ENCODE measurements at regions of chr11 and their contacts with region 1.

Region 1: DNA sequence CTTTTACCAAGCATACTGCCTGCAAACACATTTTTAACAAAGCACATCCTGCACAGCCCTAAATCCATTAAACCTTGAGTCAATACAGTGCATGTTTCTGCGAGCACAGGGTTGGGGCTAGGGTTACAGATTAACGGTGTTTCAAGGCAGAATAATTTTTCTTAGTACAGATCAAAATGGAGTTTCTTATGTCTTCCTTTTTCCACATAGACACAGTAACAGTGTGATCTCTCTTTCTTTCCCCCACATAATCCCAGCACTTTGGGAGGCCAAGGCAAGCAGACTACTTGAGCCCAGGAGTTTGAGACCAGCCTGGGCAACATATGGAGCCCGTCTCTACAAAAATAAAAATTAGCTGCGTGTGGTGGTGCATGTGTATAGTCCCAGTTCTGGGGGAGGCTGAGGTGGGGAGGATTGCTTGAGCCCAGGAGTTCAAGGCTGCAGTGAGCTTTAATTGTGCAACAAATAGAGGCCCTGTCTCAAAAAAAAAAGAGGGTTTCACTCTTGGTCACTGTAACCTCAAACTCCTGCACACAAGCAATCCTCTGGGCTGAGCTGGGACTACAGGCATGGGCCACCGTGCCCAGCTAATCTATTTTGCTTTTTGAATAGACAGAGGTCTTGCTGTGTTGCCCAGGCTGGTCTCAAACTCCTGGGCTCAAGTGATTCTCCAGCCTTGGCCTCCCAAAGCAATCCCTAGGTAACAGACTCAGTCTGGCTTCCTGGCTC is 19.7 kb upstream of the SLC3A2 start:
- DNase-seq: no peak
- H3K4me3 Mint-ChIP-seq: no peak overlapping the region
- H3K27ac Mint-ChIP-seq: no peak overlapping the region
- H3K4me1 Mint-ChIP-seq: peaks cover 23% of the 10 kb centered on the region
- H3K27me3 Mint-ChIP-seq: no peaks in the 10 kb centered on the region
- CTCF ChIP-seq: no peak

Region 2: DNA sequence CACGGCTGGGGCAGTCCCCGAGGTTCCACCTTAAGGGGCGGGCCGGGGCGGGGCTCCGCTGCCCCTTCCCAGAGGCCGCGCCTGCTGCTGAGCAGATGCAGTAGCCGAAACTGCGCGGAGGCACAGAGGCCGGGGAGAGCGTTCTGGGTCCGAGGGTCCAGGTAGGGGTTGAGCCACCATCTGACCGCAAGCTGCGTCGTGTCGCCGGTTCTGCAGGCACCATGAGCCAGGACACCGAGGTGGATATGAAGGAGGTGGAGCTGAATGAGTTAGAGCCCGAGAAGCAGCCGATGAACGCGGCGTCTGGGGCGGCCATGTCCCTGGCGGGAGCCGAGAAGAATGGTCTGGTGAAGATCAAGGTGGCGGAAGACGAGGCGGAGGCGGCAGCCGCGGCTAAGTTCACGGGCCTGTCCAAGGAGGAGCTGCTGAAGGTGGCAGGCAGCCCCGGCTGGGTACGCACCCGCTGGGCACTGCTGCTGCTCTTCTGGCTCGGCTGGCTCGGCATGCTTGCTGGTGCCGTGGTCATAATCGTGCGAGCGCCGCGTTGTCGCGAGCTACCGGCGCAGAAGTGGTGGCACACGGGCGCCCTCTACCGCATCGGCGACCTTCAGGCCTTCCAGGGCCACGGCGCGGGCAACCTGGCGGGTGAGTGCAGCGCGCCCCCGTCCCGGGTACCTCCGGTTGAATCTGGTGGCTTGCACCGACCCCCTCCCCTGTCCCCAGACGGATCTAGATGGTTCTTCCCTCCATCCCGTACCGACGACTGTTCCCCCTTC is 20.0 kb after region 1 on chr11 and contains the start of gene SLC3A2:
- CTCF ChIA-PET with region 1: interaction called, 31 read pairs
- POLR2A ChIA-PET with region 1: interaction called, 152 read pairs
- intact Hi-C with region 1: loop called (anchors 2 kb)
- DNase-seq: peak; percentile 91
- H3K4me3 Mint-ChIP-seq: peak within 1 kb of the TSS; percentile 100
- H3K27ac Mint-ChIP-seq: peak within 1 kb of the TSS; percentile 99
- H3K4me1 Mint-ChIP-seq: peaks cover 47% of the 10 kb centered on the region
- H3K27me3 Mint-ChIP-seq: no peaks in the 10 kb centered on the region
- CTCF ChIP-seq: peak; percentile 70
- total RNA-seq, gene SLC3A2: 838 and 896 TPM in 2 replicates

Region 3: GRCh38 chr11:62896049-62896448 is 35.0 kb after region 1 on chr11:
- CTCF ChIA-PET with region 1: no interaction called
- POLR2A ChIA-PET with region 1: no interaction called
- intact Hi-C with region 1: no loop called
- DNase-seq: no peak
- H3K4me3 Mint-ChIP-seq: no peak overlapping the region
- H3K27ac Mint-ChIP-seq: no peak overlapping the region
- H3K4me1 Mint-ChIP-seq: no peaks in the 10 kb centered on the region
- H3K27me3 Mint-ChIP-seq: peaks cover 40% of the 10 kb centered on the region
- CTCF ChIP-seq: no peak

Region 4: GRCh38 chr11:62965574-62965973 is 104.6 kb after region 1 on chr11:
- CTCF ChIA-PET with region 1: no interaction called
- POLR2A ChIA-PET with region 1: no interaction called
- intact Hi-C with region 1: no loop called
- DNase-seq: no peak
- H3K4me3 Mint-ChIP-seq: no peak overlapping the region
- H3K27ac Mint-ChIP-seq: no peak overlapping the region
- H3K4me1 Mint-ChIP-seq: no peaks in the 10 kb centered on the region
- H3K27me3 Mint-ChIP-seq: peaks cover 68% of the 10 kb centered on the region
- CTCF ChIP-seq: no peak

Region 5: DNA sequence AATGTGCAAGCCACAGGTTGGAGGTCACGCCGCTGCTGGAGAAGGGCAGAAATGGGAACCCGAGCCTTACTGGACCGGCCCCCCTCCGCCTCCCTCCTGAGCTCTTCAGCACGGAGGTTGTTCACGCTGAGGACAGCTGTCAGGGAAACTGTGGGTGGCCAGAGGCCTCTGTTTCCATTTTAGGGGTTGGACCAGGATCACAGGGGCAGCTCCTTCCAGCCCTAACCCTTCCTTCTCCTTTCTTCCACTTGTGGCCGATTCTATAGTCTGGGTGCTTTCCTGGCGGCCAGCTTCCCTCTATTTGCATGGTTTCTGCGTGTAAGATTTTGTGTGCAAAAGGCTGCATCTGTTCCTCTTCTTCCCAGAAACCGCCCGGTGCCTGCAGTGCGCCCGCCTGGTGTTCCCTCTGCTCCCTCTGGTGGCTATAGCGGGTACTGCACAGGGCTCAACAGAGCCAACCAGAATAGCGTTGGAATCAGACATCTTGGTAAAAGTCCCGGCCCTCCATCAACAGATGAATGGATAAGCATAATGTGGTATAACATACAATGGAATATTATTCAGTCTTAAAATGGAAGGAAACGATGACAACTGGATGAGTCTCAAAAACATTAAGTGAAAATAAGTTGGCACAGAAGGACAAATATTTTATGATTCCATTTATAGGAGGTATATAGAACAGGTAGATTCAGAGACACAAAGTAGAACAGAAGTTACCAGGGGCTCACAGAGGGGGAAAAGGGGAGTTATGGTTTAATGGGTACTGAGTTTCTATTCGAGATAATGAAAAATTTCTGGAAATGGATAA is 163.0 kb after region 1 on chr11:
- CTCF ChIA-PET with region 1: no interaction called
- POLR2A ChIA-PET with region 1: no interaction called
- intact Hi-C with region 1: no loop called
- DNase-seq: peak; percentile 76
- H3K4me3 Mint-ChIP-seq: no peak overlapping the region
- H3K27ac Mint-ChIP-seq: no peak overlapping the region
- H3K4me1 Mint-ChIP-seq: peaks cover 6% of the 10 kb centered on the region
- H3K27me3 Mint-ChIP-seq: peaks cover 25% of the 10 kb centered on the region
- CTCF ChIP-seq: peak; percentile 97

Measured in MCF 10A (cell line).